SK-N-SH (cell line): ENCODE measurements at regions of chrX and their contacts with region 1.

Region 1: DNA sequence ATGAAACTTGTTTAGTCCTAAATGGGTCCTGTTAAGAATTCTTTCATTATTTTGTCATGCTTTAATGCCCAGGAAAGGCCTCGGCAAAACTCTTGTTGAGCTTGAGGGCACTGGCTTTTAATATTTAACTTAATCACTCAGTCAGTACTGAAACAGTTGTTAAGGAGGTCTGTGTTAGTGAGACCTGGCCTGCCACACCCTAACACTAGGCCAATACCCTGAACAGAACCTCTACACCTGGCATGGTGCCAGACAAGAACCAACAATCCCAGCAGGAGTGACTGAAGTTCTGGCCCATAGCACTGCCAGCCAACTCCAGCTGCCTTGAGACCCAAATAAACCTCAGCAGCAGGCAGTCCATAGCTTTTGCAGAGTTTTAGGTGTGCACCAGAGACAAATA is 85.7 kb upstream of the ITM2A start:
- DNase-seq: no peak
- H3K4me3 ChIP-seq: no peak overlapping the region
- H3K27ac ChIP-seq: no peak overlapping the region
- H3K4me1 ChIP-seq: no peaks in the 10 kb centered on the region
- H3K27me3 ChIP-seq: no peaks in the 10 kb centered on the region
- CTCF ChIP-seq: no peak
- EP300 ChIP-seq: no peak
- RAD21 ChIP-seq: no peak

Region 2: GRCh38 chrX:79440336-79440735 is 12.5 kb before region 1 on chrX:
- CTCF ChIA-PET with region 1: interaction called, 14 read pairs
- POLR2A ChIA-PET with region 1: no interaction called
- DNase-seq: no peak
- H3K4me3 ChIP-seq: no peak overlapping the region
- H3K27ac ChIP-seq: no peak overlapping the region
- H3K4me1 ChIP-seq: no peaks in the 10 kb centered on the region
- H3K27me3 ChIP-seq: no peaks in the 10 kb centered on the region
- CTCF ChIP-seq: no peak
- EP300 ChIP-seq: no peak
- RAD21 ChIP-seq: no peak

Region 3: DNA sequence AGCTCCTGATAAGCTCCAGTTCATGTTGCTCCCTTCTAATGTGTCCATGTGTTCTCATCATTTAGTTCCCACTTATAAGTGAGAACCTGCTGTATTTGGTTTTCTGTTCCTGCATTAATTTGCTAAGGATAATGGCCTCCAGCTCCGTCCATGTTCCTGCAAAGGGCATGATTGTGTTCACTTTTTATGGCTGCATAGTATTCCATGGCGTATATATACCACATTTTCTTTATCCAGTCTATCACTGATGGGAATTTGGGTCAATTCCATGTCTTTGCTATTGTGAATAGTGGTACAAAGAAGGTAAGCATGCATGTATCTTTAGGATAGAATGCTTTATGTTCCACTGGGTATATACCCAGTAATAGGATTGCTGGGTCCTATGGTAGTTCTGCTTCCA is 111.5 kb after region 1 on chrX:
- CTCF ChIA-PET with region 1: no interaction called
- POLR2A ChIA-PET with region 1: no interaction called
- DNase-seq: no peak
- H3K4me3 ChIP-seq: no peak overlapping the region
- H3K27ac ChIP-seq: no peak overlapping the region
- H3K4me1 ChIP-seq: no peaks in the 10 kb centered on the region; a peak in 1 of 4 replicates
- H3K27me3 ChIP-seq: no peaks in the 10 kb centered on the region
- CTCF ChIP-seq: no peak
- EP300 ChIP-seq: no peak
- RAD21 ChIP-seq: no peak